ENCODE measurements at regions of chr2 and their contacts with region 1.

Region 1: GRCh38 chr2:10072656-10073480 is 7.3 kb downstream of the CYS1 start:
- DNase-seq: peak; percentile 84
- ATAC-seq: peak; percentile 99
- H3K4me3 ChIP-seq: no peak overlapping the region
- H3K27ac ChIP-seq: no peak overlapping the region
- H3K4me1 ChIP-seq: no peaks in the 10 kb centered on the region
- H3K27me3 ChIP-seq: peaks cover 35% of the 10 kb centered on the region
- CTCF ChIP-seq: peak; percentile 94
- POLR2A ChIP-seq: no peak
- RAD21 ChIP-seq: peak; percentile 87

Region 2: GRCh38 chr2:10091182-10091888 is 18.5 kb after region 1 on chr2:
- CTCF ChIA-PET with region 1: interaction called, 24 read pairs
- POLR2A ChIA-PET with region 1: no interaction called
- dilution Hi-C with region 1: no loop called
- in situ Hi-C with region 1: no loop called
- intact Hi-C with region 1: loop called (anchors 2 kb)
- DNase-seq: no peak
- ATAC-seq: peak; percentile 48
- H3K4me3 ChIP-seq: no peak overlapping the region
- H3K27ac ChIP-seq: no peak overlapping the region
- H3K4me1 ChIP-seq: no peaks in the 10 kb centered on the region
- H3K27me3 ChIP-seq: peaks cover 46% of the 10 kb centered on the region
- CTCF ChIP-seq: no peak
- POLR2A ChIP-seq: no peak
- RAD21 ChIP-seq: no peak

Region 3: DNA sequence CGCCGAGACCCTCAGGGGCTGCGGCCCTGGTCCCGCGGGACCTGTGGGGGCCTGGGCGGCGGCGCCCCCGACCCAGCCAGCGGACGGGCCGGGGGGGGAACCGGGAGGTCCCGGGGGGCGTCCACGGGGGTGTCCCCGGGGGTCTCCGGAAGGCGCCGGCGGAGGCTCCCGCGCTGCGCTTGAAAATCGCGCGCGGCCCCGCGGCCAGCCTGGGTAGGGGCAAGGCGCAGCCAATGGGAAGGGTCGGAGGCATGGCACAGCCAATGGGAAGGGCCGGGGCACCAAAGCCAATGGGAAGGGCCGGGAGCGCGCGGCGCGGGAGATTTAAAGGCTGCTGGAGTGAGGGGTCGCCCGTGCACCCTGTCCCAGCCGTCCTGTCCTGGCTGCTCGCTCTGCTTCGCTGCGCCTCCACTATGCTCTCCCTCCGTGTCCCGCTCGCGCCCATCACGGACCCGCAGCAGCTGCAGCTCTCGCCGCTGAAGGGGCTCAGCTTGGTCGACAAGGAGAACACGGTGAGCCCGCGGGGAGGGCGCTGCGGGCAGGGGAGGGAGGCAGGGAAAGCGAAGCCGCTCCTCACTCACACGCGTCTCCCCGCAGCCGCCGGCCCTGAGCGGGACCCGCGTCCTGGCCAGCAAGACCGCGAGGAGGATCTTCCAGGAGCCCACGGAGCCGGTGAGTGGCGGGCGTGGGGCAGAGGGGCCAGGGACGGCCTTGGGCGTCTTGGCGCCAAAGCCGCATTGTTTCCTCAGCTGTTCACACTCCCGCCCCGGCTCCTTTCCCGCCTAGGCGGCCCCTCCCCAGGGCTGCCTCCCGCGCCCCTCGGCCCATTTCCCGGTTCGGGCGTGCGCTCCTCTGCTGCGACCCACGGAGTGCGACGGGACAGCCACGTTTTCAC is 49.8 kb after region 1 on chr2 and contains the start of gene RRM2:
- CTCF ChIA-PET with region 1: interaction called, 5 read pairs
- POLR2A ChIA-PET with region 1: no interaction called
- dilution Hi-C with region 1: no loop called
- in situ Hi-C with region 1: no loop called
- intact Hi-C with region 1: loop called (anchors 1 kb)
- DNase-seq: peak; percentile 87
- ATAC-seq: peak; percentile 87
- H3K4me3 ChIP-seq: peak within 1 kb of the TSS; percentile 82
- H3K27ac ChIP-seq: peak within 1 kb of the TSS; percentile 81; the same call in 1 of the 2 replicates
- H3K4me1 ChIP-seq: peaks cover 11% of the 10 kb centered on the region
- H3K27me3 ChIP-seq: no peaks in the 10 kb centered on the region
- CTCF ChIP-seq: no peak
- POLR2A ChIP-seq: peak; percentile 91
- RAD21 ChIP-seq: no peak
- total RNA-seq, gene RRM2: 53.6 and 75.5 TPM in 2 replicates

Region 4: DNA sequence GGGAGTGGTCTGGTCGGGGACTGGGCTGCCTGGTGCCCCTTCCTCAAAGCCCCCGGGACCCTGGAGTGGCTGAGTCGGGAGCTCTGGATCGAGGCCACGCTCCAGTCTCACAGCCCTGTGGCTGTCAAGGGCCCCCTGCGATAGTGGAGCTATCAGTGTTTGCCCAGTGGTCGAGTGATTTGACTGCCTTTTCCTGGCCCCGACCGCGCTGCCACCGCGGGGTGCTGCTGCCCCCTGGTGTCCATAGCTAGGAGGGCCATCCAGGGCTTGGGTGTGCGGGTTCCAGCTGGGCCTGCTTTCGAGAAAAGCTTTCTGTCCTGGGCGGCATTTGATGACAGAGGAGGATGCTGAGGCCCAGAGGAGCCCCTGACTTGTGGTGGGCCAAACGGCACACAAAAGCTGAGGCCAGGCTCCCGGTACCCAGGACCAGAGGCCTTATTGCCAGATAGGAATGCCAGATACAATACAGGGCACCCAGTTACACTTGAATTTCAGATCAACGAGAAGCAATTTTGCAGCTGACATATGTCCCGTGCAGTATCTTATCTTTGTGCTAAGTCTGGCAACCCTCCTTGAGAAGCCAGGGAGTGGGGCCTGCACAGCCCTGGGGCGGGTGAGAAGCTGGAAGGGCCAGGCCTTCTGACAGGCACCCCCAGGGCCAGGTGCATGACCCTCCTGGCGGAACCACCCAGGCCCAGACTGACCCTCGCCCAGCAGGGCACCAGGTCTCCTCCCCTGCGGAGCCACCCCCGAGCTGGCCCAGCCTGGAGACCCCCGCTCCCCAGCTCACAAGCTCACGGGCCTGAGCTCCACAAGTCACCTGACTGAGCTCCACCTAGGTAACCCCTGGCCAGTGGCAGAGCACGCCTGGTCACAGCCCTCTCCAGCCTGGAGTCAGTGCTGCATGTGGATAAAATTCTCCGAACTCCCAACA is 362.3 kb after region 1 on chr2:
- CTCF ChIA-PET with region 1: interaction called, 29 read pairs
- POLR2A ChIA-PET with region 1: no interaction called
- dilution Hi-C with region 1: no loop called
- in situ Hi-C with region 1: loop called (anchors 5 kb)
- intact Hi-C with region 1: loop called (anchors 1 kb)
- DNase-seq: peak; percentile 52
- ATAC-seq: peak; percentile 93
- H3K4me3 ChIP-seq: no peak overlapping the region
- H3K27ac ChIP-seq: no peak overlapping the region
- H3K4me1 ChIP-seq: no peaks in the 10 kb centered on the region
- H3K27me3 ChIP-seq: no peaks in the 10 kb centered on the region
- CTCF ChIP-seq: peak; percentile 98
- POLR2A ChIP-seq: peak; percentile 58; the same call in 1 of the 2 replicates
- RAD21 ChIP-seq: peak; percentile 100

Region 5: DNA sequence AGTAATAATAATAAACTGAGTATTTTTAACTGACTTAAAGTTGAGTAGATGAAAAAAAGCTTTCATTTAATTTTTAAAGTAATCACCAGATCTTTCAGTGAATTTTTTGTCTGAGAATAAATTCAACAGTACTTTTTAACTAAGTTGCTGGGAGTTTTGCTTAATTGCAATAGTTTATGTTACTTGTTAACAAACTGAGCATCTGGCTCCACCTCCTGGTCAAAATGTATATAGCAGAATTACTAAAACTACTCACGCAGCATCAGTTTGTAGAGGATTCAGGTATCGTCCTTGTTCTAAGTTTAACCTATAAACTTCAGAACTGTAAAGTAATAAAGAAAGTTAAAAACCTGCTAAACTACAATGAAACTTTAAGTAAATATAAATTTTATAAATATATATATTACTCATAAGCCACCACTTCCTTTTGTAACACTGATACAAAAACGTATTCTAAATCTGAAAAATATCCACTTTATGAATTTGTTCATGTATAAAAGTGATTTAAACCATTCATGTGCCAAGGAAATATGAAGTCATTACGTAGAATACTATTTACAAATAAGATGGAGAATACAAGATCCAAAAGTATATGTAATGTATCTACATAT is 595.6 kb after region 1 on chr2:
- CTCF ChIA-PET with region 1: no interaction called
- POLR2A ChIA-PET with region 1: no interaction called
- dilution Hi-C with region 1: no loop called
- in situ Hi-C with region 1: loop called (anchors 10 kb)
- intact Hi-C with region 1: loop called (anchors 2 kb)
- DNase-seq: peak; percentile 69
- ATAC-seq: peak; percentile 74
- H3K4me3 ChIP-seq: no peak overlapping the region
- H3K27ac ChIP-seq: no peak overlapping the region
- H3K4me1 ChIP-seq: no peaks in the 10 kb centered on the region
- H3K27me3 ChIP-seq: no peaks in the 10 kb centered on the region
- CTCF ChIP-seq: peak; percentile 65
- POLR2A ChIP-seq: no peak
- RAD21 ChIP-seq: peak; percentile 61